Activated CD4-positive, alpha-beta T cell treated with anti-CD3 and anti-CD28 coated beads, Interleukin-2, amount 10 ng/mL, durations not matched to agents 7 days and 5 days (primary cell): ENCODE measurements at regions of chrX and their contacts with region 1.

Region 1: DNA sequence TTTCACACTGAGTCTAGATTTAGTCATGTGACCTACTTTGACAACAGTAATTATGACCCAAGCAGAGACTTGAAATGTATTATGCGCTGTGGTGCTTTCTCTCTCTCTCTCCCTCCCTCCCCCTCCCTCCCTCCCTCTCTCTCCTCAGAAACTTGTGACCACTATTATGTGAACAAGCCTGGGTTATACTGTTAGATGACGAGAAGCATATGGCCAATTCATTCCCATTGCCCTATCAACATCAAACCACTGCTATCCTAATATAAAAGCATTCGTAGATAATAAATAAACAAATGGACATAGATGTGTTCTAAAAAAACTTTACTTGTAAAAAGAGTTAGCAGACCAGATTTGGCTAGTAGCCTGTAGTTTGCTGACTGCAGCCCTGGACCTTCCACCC is 18.2 kb downstream of the FTHL17 start:
- DNase-seq: no peak
- H3K4me3 Mint-ChIP-seq: no peak overlapping the region
- H3K27ac Mint-ChIP-seq: no peak overlapping the region
- H3K4me1 Mint-ChIP-seq: no peaks in the 10 kb centered on the region
- H3K27me3 Mint-ChIP-seq: no peaks in the 10 kb centered on the region

Region 2: GRCh38 chrX:30920263-30920662 is 133.4 kb before region 1 on chrX:
- CTCF ChIA-PET with region 1: no interaction called
- POLR2A ChIA-PET with region 1: no interaction called
- DNase-seq: no peak
- H3K4me3 Mint-ChIP-seq: no peak overlapping the region
- H3K27ac Mint-ChIP-seq: no peak overlapping the region
- H3K4me1 Mint-ChIP-seq: no peaks in the 10 kb centered on the region
- H3K27me3 Mint-ChIP-seq: peaks cover 3% of the 10 kb centered on the region

Region 3: DNA sequence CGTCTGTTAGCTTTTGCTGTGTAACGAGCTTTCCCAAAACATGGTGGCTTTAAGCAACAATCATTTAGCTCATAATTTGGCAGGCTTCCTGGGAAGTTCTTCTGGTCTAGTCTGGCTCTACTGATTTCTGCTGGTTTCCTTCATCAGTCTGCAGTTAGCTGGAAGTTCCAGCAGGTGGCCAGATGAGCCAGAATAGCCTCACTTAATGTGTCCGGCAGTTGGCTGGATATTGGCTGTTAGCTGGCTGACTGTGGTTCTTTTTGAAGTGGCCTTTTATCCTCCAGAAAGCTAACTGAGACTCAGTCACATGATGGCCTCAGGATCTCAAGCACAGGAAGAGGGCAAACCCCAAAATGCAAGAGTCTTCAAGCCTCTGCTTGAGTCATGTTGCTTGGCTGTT is 16.7 kb before region 1 on chrX:
- CTCF ChIA-PET with region 1: interaction called, 10 read pairs
- POLR2A ChIA-PET with region 1: no interaction called
- DNase-seq: no peak
- H3K4me3 Mint-ChIP-seq: no peak overlapping the region
- H3K27ac Mint-ChIP-seq: no peak overlapping the region
- H3K4me1 Mint-ChIP-seq: peaks cover 5% of the 10 kb centered on the region
- H3K27me3 Mint-ChIP-seq: no peaks in the 10 kb centered on the region

Region 4: GRCh38 chrX:31074522-31074921 is 20.9 kb after region 1 on chrX:
- CTCF ChIA-PET with region 1: no interaction called
- POLR2A ChIA-PET with region 1: no interaction called
- DNase-seq: no peak
- H3K4me3 Mint-ChIP-seq: no peak overlapping the region
- H3K27ac Mint-ChIP-seq: no peak overlapping the region
- H3K4me1 Mint-ChIP-seq: peaks cover 3% of the 10 kb centered on the region
- H3K27me3 Mint-ChIP-seq: no peaks in the 10 kb centered on the region